ENCODE measurements at regions of chr4 and their contacts with region 1.

Region 1: GRCh38 chr4:15457406-15458201 is 12.1 kb upstream of the CC2D2A start:
- DNase-seq: no peak
- H3K4me3 ChIP-seq: no peak overlapping the region
- H3K27ac ChIP-seq: peak overlapping the region; percentile 61 to 79
- H3K4me1 ChIP-seq: peaks cover 8 to 58% of the 10 kb centered on the region in 2 donors
- H3K27me3 ChIP-seq: no peaks in the 10 kb centered on the region
- CTCF ChIP-seq: peak; percentile 65 to 79 (median 68)

Region 2: GRCh38 chr4:14168919-14169318 is 1288.7 kb before region 1 on chr4:
- intact Hi-C with region 1: no loop called
- DNase-seq: no peak
- H3K4me3 ChIP-seq: no peak overlapping the region
- H3K27ac ChIP-seq: no peak overlapping the region
- H3K4me1 ChIP-seq: no peaks in the 10 kb centered on the region
- H3K27me3 ChIP-seq: no peaks in the 10 kb centered on the region
- CTCF ChIP-seq: no peak

Region 3: DNA sequence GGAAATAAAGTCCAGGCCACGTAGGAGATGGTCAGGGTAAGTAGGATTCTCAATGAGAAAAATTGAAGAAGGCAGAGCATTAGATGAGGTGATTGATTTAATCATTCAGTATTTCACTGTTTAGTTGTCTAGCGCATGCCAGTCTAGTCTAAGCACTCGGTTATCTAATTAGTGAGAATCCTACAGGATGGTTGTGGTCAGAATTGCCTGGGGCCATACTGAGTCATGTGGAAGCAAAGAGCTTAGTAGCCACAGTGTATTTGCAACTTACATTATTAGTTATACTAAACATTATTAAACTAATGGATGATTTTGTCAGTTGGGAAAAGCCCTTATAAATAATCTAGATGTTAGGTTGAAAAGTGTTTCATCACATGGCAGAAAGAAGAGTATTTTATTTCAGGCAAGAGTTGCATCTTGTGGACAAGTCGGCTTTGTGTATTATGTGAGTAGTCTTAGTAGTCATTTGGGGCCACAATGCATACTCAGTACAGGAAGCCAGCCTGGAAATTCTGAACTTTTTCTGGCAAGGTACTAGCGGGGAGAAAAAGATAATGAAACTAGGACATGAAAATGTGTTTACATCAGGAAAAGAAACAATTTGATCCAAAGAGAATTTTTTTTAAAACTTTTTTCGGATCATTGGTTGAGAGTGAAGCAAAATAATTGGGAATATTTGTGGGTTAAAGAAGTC is 423.4 kb before region 1 on chr4:
- intact Hi-C with region 1: loop called (anchors 10 kb)
- DNase-seq: no peak
- H3K4me3 ChIP-seq: peak overlapping the region; percentile 0 to 2
- H3K27ac ChIP-seq: peak overlapping the region; percentile 35 to 75
- H3K4me1 ChIP-seq: peaks cover 3 to 54% of the 10 kb centered on the region in 2 donors
- H3K27me3 ChIP-seq: no peaks in the 10 kb centered on the region
- CTCF ChIP-seq: no peak

Region 4: DNA sequence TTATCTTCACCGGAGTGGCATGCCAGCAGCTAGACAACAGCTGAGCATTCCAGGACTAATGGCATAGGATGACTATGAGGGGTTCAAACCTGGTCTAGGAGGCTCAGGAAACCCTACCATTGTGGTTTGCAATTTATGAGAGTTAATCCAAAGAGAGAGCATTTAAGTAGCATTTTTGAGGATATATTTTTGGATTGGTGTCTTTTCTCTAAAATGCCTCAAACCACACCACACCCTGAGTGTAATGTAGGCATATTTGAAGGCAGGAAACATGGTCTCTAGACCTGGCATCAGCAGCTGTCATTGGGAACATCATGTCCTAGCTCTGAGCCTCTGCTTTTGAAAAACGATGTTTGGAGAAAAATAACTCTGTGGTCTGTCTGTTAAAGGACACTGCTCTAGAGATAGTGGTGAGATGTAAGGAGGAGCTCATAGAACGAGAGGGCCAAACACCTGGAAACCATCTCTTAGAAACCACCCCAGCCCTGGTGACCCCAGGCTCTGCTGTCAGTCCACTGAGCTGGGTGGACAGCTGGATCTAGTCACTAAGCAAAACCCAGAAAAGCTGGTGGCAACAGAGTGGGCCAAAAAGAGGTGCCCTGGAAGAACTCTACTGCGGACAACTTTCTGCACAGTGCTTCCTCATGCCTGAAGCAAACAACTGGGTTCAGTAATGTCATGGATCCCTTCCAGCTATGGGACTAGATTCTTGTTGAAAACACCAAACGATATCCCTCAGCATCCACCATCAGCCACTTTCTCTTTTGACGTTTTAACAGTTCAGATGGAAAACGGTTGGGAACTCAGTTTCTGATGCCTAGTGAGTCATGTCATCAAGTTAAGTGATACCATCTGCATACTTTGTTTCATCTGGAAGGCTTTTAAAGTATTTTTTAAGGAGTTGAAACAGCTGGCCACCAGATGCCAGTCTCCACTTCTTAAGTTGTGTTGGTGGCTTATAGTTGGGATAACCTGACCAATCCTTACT is 130.0 kb before region 1 on chr4:
- intact Hi-C with region 1: loop called (anchors 5 kb)
- DNase-seq: no peak
- H3K4me3 ChIP-seq: no peak overlapping the region
- H3K27ac ChIP-seq: peak overlapping the region in 1 of 2 donors; percentile 27
- H3K4me1 ChIP-seq: peaks cover 0 to 4% of the 10 kb centered on the region in 2 donors
- H3K27me3 ChIP-seq: no peaks in the 10 kb centered on the region
- CTCF ChIP-seq: no peak

Region 5: GRCh38 chr4:15402146-15402545 is 55.5 kb before region 1 on chr4:
- intact Hi-C with region 1: loop called (anchors 1 kb)
- DNase-seq: no peak
- H3K4me3 ChIP-seq: peak overlapping the region; percentile 15 to 19
- H3K27ac ChIP-seq: peak overlapping the region; percentile 82 to 90
- H3K4me1 ChIP-seq: peaks cover 15 to 75% of the 10 kb centered on the region in 2 donors
- H3K27me3 ChIP-seq: no peaks in the 10 kb centered on the region
- CTCF ChIP-seq: no peak